ENCODE measurements at regions of chr3 and their contacts with region 1.

Region 1: DNA sequence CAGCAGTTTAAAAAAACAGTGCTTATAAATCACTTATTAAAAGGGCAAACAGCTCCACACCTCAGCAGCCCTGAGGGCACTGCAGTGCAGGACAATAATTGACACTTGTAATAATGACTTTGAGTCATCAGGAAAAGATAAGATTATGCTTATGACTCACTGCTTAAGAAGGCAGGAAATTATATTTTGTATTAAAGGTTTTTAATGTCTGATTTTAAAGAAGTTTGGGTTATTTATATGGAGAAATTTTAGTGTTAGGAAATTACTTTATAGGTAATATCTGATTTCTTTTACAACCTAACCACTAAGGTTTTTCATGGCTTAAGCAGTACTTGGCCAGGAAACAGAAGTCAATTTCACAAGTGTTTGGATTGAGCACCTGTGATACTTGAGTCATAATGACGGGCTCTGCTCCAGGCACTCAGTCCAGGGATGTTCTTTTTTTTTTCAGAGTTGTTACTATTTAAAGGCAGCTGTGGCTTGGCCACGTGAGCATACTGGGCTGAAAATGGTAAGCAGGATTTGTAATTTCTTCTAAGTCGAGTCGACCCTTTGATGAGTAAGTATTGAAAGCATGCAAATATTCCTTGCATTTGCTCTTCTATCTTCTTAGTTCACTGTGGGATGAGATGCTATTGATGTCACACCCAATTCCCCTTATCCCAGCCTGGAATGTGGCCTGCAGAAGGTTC is 21.6 kb upstream of the SLC6A20 start:
- DNase-seq: no peak
- H3K4me3 Mint-ChIP-seq: no peak overlapping the region
- H3K27ac Mint-ChIP-seq: no peak overlapping the region
- H3K4me1 Mint-ChIP-seq: no peaks in the 10 kb centered on the region
- H3K27me3 Mint-ChIP-seq: peaks cover 8% of the 10 kb centered on the region

Region 2: GRCh38 chr3:44950275-44950734 is 867.7 kb before region 1 on chr3:
- intact Hi-C with region 1: no loop called
- DNase-seq: no peak
- H3K4me3 Mint-ChIP-seq: no peak overlapping the region
- H3K27ac Mint-ChIP-seq: no peak overlapping the region
- H3K4me1 Mint-ChIP-seq: peaks cover 14% of the 10 kb centered on the region
- H3K27me3 Mint-ChIP-seq: no peaks in the 10 kb centered on the region

Region 3: DNA sequence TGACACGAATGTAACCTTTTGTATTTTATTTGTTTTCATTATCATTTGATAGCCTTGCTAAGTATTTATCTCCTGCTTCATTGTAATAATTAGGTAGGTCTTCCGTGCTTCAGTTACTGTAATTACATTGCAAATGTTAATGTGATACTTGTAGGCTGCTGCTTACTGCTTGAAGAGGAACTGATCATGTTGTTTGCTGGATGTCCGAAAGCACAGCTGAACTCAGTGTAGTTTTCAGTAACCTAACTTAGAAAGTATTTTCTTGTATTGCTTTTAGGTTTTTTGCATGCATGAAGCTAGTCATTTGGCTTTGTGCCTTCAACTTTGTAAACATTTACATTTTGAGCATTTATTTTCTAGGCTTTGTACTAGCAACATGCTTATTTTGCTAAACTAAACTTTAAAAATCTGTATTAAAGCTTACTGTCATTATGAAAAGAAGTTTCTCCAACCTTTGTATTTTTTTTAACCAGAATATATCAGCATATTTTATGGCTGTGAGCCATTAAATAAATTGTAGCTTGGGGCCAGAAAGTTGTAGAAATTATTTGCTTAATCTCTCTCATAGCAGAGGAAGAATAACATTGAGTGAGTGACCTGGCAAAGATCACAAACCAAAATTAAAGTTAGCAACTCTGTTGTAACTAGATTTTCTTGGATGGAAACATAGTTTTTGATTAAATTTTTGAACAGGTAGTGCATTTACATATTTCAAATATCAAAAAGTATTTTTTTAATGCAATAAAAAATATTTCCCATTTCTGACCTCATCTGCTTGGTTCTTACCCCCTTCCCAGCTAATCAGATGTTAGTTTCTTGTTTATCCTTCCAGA is 98.1 kb before region 1 on chr3:
- intact Hi-C with region 1: loop called (anchors 1 kb)
- DNase-seq: no peak
- H3K4me3 Mint-ChIP-seq: no peak overlapping the region
- H3K27ac Mint-ChIP-seq: no peak overlapping the region
- H3K4me1 Mint-ChIP-seq: peaks cover 18% of the 10 kb centered on the region
- H3K27me3 Mint-ChIP-seq: no peaks in the 10 kb centered on the region

Region 4: DNA sequence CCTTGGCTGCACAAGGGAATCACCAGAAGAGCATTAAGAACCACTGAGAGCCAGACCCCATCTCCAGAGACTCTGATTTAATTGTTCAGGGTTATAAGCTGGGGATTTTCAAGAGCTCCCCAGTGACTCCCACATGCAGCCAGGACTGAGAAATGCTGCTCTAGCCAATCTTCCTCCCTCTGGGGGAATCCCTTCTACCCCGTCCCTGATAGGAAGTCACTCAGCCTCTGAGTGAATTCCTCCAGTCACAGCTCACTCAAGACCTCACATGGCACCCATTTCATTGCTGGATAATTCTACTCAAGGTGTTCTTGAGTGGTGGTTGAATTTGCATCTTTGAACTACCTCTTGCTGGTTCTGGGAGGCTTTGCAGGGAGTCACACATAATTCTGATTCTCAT is 435.0 kb after region 1 on chr3:
- intact Hi-C with region 1: no loop called
- DNase-seq: no peak
- H3K4me3 Mint-ChIP-seq: no peak overlapping the region
- H3K27ac Mint-ChIP-seq: no peak overlapping the region
- H3K4me1 Mint-ChIP-seq: peaks cover 5% of the 10 kb centered on the region
- H3K27me3 Mint-ChIP-seq: peaks cover 30% of the 10 kb centered on the region